Testis (tissue), 5 donors: ENCODE measurements at regions of chr15 and their contacts with region 1.

Region 1: DNA sequence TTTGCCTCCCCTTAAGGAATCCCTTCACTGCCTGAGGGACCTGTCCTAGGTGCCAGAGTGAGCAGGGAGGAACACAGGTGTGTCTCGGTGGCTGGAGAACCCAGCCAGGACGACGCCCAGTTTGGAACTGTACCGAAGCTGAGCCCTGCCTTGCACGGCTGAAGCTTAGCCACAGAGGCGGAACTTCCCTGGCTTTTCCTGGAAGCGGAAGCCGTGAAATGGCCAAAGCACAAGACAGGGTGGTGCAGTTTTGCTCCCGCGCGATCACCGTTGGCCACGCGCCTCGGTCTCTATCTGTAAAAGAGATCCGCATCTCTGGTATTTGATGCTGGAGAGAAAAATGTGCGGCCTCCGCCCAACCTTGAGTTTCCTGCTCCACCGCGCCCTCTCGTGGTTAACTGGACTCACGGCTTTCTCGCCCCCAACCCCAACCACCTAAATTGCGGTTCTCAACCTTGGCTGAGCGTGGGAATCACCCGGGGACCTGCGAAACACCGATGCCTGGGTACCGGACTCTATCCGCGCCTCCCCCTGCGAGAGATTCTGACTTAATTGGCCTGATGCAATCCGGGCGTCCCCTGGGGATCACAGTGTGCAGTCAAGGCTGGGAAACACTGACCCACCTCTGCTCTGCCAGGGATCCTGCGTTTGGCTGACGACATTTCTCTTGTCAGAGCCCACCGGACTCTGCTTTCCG is 70.7 kb upstream of the ABHD2 start:
- DNase-seq: peak; percentile 85
- H3K4me3 ChIP-seq: peak overlapping the region; percentile 16 to 39
- H3K27ac ChIP-seq: peak overlapping the region in 1 of 2 donors; percentile 15
- H3K4me1 ChIP-seq: peaks cover 10% of the 10 kb centered on the region
- H3K27me3 ChIP-seq: no peaks in the 10 kb centered on the region
- CTCF ChIP-seq: peak; percentile 55 to 85 (median 68)
- POLR2A ChIP-seq: no peak

Region 2: GRCh38 chr15:88904624-88905327 is 112.7 kb before region 1 on chr15:
- intact Hi-C with region 1: loop called (anchors 10 kb)
- DNase-seq: peak; percentile 90
- H3K4me3 ChIP-seq: no peak overlapping the region
- H3K27ac ChIP-seq: no peak overlapping the region
- H3K4me1 ChIP-seq: peaks cover 3% of the 10 kb centered on the region
- H3K27me3 ChIP-seq: no peaks in the 10 kb centered on the region
- CTCF ChIP-seq: peak; percentile 93 to 98 (median 96)
- POLR2A ChIP-seq: no peak

Region 3: DNA sequence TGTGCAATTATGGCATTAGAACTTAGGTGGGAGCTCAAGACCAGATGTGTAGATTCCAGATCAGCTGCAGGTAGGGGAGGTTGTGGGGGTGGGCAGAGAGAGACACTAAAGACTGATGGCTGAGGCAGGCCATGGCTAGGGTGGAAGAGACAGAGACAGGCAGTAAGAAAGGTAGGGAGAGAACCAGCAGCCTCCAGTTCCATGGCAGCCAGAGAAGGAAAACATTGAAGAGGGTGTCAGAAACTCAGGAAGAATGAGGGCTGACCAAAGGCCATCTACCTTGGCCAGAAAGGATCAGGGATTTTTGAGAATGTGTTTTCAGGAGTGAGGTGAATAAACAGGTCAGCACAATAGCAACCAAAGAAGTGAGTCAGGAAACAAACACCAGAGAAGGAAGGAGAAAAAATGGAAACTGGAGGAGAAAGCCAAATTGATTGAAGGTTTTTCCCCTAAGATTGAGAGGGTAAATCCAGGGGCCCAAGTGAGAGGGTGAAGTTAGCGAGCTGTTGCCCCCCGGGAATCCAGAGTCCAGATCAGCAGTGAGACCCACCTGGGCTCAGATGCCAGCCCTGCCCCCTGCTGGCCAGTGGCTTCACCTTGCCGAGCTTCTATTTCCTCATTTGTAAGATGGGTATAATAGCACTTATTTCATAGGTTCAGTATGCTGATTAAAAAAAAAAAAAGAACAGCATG is 111.8 kb after region 1 on chr15:
- intact Hi-C with region 1: no loop called
- DNase-seq: peak; percentile 40
- H3K4me3 ChIP-seq: no peak overlapping the region
- H3K27ac ChIP-seq: no peak overlapping the region
- H3K4me1 ChIP-seq: peaks cover 6% of the 10 kb centered on the region
- H3K27me3 ChIP-seq: no peaks in the 10 kb centered on the region
- CTCF ChIP-seq: peak in 2 of 3 experiments; percentile 35 to 57
- POLR2A ChIP-seq: no peak